ENCODE measurements at regions of chr19 and their contacts with region 1.

Region 1: GRCh38 chr19:18251587-18252369 is 22.5 kb downstream of the IQCN start:
- DNase-seq: peak; percentile 58 to 84
- H3K4me3 ChIP-seq: no peak overlapping the region
- H3K27ac ChIP-seq: no peak overlapping the region
- H3K4me1 ChIP-seq: no peaks in the 10 kb centered on the region
- H3K27me3 ChIP-seq: peaks cover 0 to 6% of the 10 kb centered on the region in 2 donors
- CTCF ChIP-seq: peak; percentile 87 to 96

Region 2: DNA sequence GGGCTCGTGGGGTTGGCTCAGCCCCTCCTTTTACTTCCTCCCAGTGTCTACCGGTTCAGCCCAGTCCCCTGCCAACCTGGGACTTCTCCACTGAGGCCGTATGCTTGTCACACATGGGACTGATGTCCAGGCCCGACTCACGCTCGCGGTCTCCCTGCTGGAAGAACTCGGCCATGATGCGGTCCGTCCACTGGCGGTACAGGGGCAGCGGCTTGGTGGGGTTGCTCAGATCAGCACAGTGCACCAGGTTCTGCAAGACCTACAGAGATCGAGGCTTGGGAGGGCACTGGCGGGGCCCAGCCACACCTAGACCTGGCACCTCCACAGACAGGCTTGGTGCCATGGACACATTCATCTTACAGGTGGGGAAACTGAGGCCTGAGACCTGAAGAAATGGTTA is 40.1 kb before region 1 on chr19:
- intact Hi-C with region 1: loop called (anchors 2 kb)
- DNase-seq: no peak
- H3K4me3 ChIP-seq: no peak overlapping the region
- H3K27ac ChIP-seq: no peak overlapping the region
- H3K4me1 ChIP-seq: no peaks in the 10 kb centered on the region
- H3K27me3 ChIP-seq: peaks cover 0 to 4% of the 10 kb centered on the region in 2 donors
- CTCF ChIP-seq: no peak